ENCODE measurements at regions of chr19 and their contacts with region 1.

Region 1: GRCh38 chr19:1295169-1296012 is 9.7 kb downstream of the EFNA2 start:
- DNase-seq: no peak
- ATAC-seq: peak in 3 of 4 donors; percentile 27 to 42 (median 41)
- H3K4me3 ChIP-seq: no peak overlapping the region
- H3K27ac ChIP-seq: no peak overlapping the region
- H3K4me1 ChIP-seq: peaks cover 0 to 19% (median 6%) of the 10 kb centered on the region in 4 donors
- H3K27me3 ChIP-seq: no peaks in the 10 kb centered on the region
- CTCF ChIP-seq: no peak
- POLR2A ChIP-seq: no peak

Region 2: GRCh38 chr19:1232652-1233072 is 62.7 kb before region 1 on chr19:
- intact Hi-C with region 1: no loop called
- DNase-seq: no peak
- ATAC-seq: peak; percentile 24 to 39 (median 26)
- H3K4me3 ChIP-seq: no peak overlapping the region
- H3K27ac ChIP-seq: no peak overlapping the region
- H3K4me1 ChIP-seq: peaks cover 0 to 7% (median 0%) of the 10 kb centered on the region in 4 donors
- H3K27me3 ChIP-seq: no peaks in the 10 kb centered on the region
- CTCF ChIP-seq: no peak
- POLR2A ChIP-seq: no peak

Region 3: DNA sequence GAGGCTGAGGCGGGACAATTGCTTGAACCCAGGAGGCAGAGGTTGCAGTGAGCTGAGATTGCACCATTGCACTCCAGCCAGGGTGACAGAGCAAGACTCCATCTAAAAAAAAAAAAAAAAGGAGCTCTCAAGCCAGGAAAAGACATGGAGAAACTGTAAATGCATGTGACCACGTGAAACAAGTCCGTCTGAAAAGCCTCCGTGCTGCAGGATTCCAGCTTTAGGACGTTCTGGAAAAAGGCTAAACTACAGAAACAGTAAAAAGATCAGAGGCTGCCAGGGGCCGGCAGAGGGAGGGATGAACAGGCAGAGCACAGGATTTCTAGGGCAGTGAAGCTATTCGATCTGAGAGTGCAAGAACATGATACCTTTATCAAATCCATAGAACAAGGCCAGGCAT is 47.6 kb after region 1 on chr19:
- intact Hi-C with region 1: no loop called
- DNase-seq: no peak
- ATAC-seq: no peak
- H3K4me3 ChIP-seq: no peak overlapping the region
- H3K27ac ChIP-seq: no peak overlapping the region
- H3K4me1 ChIP-seq: no peaks in the 10 kb centered on the region
- H3K27me3 ChIP-seq: no peaks in the 10 kb centered on the region
- CTCF ChIP-seq: no peak
- POLR2A ChIP-seq: no peak

Region 4: GRCh38 chr19:1360818-1361461 is 65.5 kb after region 1 on chr19:
- intact Hi-C with region 1: loop called in 1 of 2 experiments (anchors 10 kb)
- DNase-seq: peak in 2 of 3 donors; percentile 78 to 82
- ATAC-seq: peak; percentile 29 to 85 (median 33)
- H3K4me3 ChIP-seq: no peak overlapping the region
- H3K27ac ChIP-seq: peak overlapping the region in 1 of 3 donors; percentile 15
- H3K4me1 ChIP-seq: peaks cover 0 to 17% (median 3%) of the 10 kb centered on the region in 4 donors
- H3K27me3 ChIP-seq: no peaks in the 10 kb centered on the region
- CTCF ChIP-seq: no peak
- POLR2A ChIP-seq: no peak

Region 5: DNA sequence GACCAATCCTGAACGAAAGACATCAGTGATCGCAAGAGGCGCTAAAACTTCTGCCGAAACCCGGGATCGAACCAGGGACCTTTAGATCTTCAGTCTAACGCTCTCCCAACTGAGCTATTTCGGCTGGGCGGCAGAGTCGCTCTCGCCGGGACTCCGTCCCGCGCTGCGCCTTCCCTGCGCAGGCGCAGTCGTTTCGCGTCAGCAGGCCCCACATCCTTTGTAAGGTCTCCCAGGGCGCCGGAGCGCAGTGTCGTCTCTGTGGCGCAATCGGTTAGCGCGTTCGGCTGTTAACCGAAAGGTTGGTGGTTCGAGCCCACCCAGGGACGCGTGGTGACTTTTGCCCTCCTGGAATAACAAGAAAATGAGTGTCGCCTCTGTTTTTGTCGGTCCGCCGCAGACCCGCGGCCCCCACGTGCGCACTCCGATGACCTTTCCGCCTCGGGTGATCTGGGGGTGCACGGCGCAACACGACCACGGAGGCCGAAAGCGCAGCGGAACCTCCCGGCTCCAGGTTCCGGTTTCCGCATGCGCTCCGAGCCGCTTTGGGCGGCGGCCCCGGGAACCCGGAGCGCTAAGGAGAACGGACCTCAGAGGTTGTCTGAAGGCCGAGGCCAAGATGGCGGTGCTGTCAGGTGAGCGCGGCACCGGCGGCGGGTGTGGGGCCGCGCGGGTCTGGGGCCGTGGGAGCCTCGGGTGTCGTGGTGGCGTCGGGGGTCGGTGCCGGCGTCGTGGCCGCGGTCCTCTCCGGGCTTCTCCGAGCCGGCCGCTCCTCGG is 88.1 kb after region 1 on chr19 and contains the start of gene NDUFS7:
- intact Hi-C with region 1: no loop called
- DNase-seq: peak; percentile 90
- ATAC-seq: peak; percentile 87 to 92 (median 88)
- H3K4me3 ChIP-seq: peak within 1 kb of the TSS; percentile 87 to 97 (median 88)
- H3K27ac ChIP-seq: peak within 1 kb of the TSS; percentile 70 to 83 (median 83)
- H3K4me1 ChIP-seq: peaks cover 0 to 7% (median 3%) of the 10 kb centered on the region in 4 donors
- H3K27me3 ChIP-seq: no peaks in the 10 kb centered on the region
- CTCF ChIP-seq: peak in 2 of 4 donors; percentile 2 to 40
- POLR2A ChIP-seq: peak; percentile 56
- total RNA-seq, gene NDUFS7: 70.1 to 210 (median 85.0) TPM